Dorsolateral prefrontal cortex (tissue), 120 donors: ENCODE measurements at regions of chr2 and their contacts with region 1.

Region 1: DNA sequence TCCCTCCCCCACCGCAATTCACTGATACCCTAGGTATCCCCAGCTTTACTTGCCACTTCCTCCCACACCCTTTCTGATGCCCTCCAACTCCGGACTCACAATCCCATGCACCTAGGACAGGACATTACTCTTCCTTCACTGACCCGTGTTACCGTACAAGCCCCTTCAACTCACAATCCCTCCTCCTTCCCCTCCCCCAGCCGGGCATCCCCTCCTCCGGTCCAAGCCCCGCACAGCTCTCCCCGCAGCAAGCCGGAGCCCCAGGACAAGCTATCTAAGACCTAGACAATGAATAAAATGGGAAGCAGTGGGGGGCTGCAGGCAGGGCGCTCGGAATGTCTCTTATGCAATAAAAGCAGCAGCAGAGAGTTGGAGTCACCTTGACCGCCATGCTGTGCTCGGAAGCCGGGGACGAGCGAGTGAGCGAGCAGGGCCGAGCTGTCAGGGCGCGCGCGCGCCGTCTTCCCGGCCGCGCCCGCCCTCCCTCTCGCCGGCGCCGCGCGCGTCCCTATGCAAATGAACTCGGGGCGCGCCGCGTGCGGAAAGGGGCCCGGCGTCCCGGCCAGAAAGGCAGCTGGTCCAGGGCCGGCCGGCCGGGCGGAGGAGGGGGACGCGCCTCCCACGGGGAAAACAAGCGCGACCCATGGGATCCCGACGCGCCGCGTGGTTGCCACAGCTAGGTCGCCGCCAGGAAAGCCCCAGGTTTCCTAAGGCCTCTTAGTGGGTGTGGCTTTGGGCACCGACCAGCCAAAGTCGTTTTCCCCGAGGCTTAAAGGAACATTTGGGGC is at the start of gene SLC25A12:
- DNase-seq: peak; percentile 56 to 86 (median 76)
- H3K4me3 ChIP-seq: peak within 1 kb of the TSS; percentile 67 to 97 (median 86)
- H3K27ac ChIP-seq: peak within 1 kb of the TSS in 56 of 59 donors; percentile 3 to 92 (median 75)
- H3K27me3 ChIP-seq: no peaks in the 10 kb centered on the region
- CTCF ChIP-seq: peak in 11 of 56 donors; percentile 11 to 36 (median 17)
- total RNA-seq, gene SLC25A12: 37.2 to 159 (median 105) TPM

Region 2: DNA sequence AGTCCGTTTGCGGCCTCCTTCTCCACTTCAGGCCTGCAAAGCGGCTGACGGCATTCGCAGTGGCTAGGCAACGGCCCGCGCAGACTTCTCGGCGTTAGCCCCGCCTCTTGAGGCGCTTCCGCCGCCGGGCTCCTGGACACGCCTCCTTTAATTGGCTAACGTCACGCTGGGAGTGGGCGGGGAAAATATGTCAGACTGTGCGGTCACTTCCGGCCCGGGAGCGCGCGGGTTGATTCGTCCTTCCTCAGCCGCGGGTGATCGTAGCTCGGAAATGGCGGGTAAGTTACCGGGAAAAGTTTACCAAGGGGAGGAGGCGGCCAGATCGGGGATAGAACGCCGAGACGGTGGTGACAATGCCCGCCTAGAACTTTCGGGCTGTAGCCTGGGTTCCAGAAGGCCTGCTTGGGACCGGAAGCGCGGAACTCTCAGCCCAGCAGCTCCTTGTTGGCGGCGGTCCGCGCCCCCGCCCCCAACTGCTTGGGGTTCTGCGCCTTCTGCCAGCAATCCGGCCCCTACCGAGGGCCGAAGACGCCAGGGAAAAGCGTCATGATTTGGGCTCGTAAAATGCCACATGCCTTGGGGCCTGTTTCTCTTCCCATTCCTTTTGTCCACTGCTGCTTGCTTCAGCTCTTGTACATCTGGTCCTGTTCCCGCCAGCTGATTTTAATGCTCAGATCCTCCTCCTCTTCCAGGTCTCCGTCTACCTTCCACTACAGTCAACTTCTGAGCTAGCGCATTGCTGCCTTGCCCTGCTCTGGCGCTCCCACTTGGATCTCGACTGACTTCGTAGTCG is 28.4 kb after region 1 on chr2 and contains the start of gene HAT1:
- intact Hi-C with region 1: loop called (anchors 1 to 2 kb)
- DNase-seq: peak; percentile 95 to 99 (median 98)
- H3K4me3 ChIP-seq: peak within 1 kb of the TSS; percentile 56 to 99 (median 89)
- H3K27ac ChIP-seq: peak within 1 kb of the TSS; percentile 41 to 95 (median 88)
- H3K27me3 ChIP-seq: no peaks in the 10 kb centered on the region
- CTCF ChIP-seq: peak in 19 of 56 donors; percentile 5 to 42 (median 20)
- total RNA-seq, gene HAT1: 13.9 to 33.5 (median 22.1) TPM